ENCODE measurements at regions of chr13 and their contacts with region 1.

Region 1: GRCh38 chr13:46553886-46554858 is 1.2 kb downstream of the LRCH1 start:
- DNase-seq: peak; percentile 51 to 78 (median 77)
- H3K4me3 ChIP-seq: peak overlapping the region; percentile 55 to 93 (median 83)
- H3K4me3 Mint-ChIP-seq: peak overlapping the region; percentile 93 to 95
- H3K27ac ChIP-seq: peak overlapping the region; percentile 55 to 80
- H3K27ac Mint-ChIP-seq: peak overlapping the region; percentile 65 to 90 (median 87)
- H3K4me1 ChIP-seq: peaks cover 18 to 30% of the 10 kb centered on the region in 2 donors
- H3K4me1 Mint-ChIP-seq: peaks cover 38% of the 10 kb centered on the region
- H3K27me3 ChIP-seq: no peaks in the 10 kb centered on the region
- H3K27me3 Mint-ChIP-seq: peaks cover 6 to 14% (median 10%) of the 10 kb centered on the region in 3 donors
- CTCF ChIP-seq: peak; percentile 44

Region 2: GRCh38 chr13:45615501-45616101 is 938.6 kb before region 1 on chr13 and contains the start of gene ERICH6B:
- intact Hi-C with region 1: no loop called
- DNase-seq: no peak
- H3K4me3 ChIP-seq: peak within 1 kb of the TSS in 1 of 3 experiments; percentile 53
- H3K4me3 Mint-ChIP-seq: peak within 1 kb of the TSS; percentile 8 to 81
- H3K27ac ChIP-seq: no peak within 1 kb of the TSS
- H3K27ac Mint-ChIP-seq: no peak within 1 kb of the TSS
- H3K4me1 ChIP-seq: peaks cover 8 to 9% of the 10 kb centered on the region in 2 donors
- H3K4me1 Mint-ChIP-seq: peaks cover 10% of the 10 kb centered on the region
- H3K27me3 ChIP-seq: peaks cover 2 to 20% of the 10 kb centered on the region in 2 donors
- H3K27me3 Mint-ChIP-seq: peaks cover 22 to 44% (median 26%) of the 10 kb centered on the region in 3 donors
- CTCF ChIP-seq: no peak
- polyA plus RNA-seq, gene ERICH6B: not detected

Region 3: DNA sequence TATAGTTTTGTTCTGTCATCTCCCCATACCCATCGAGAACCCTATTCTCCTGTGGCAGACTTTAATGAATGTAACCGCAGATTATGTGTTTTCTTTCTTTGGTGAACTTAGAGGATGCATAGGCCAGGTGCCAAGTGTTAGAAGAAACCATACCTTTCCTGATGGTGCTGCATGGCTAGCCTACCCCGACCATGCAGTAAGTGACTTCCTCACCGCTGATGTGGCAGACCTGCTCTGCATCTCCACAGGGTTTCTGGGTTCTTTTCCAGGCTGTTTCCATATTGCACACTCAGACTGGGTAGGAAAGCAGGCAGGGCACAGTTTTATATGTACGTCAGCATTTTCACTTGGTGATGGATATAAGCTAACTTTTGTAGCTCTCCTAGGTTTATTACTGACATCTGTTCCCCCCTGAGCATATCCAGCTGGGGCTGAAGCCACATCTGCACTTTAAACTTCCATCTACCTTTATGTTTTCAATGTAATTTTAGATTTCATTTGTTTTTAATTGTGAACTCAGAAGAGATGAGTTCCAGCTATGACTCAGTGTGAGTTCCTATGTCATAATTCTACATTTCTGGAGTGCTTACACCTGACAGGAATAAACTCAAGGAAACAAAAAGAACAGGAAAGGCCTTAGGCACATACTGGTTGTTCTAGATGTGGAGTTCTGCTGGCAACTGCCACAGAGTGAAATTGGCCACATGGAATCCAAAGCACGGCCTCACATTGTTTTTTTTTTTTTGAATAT is 41.1 kb after region 1 on chr13:
- intact Hi-C with region 1: loop called in 1 of 2 experiments (anchors 5 kb)
- DNase-seq: peak in 2 of 3 donors; percentile 21 to 39
- H3K4me3 ChIP-seq: peak overlapping the region in 2 of 3 experiments; percentile 32 to 63
- H3K4me3 Mint-ChIP-seq: peak overlapping the region; percentile 39 to 77
- H3K27ac ChIP-seq: peak overlapping the region in 1 of 2 donors; percentile 77
- H3K27ac Mint-ChIP-seq: peak overlapping the region; percentile 82 to 91 (median 89)
- H3K4me1 ChIP-seq: peaks cover 53 to 57% of the 10 kb centered on the region in 2 donors
- H3K4me1 Mint-ChIP-seq: peaks cover 62% of the 10 kb centered on the region
- H3K27me3 ChIP-seq: no peaks in the 10 kb centered on the region
- H3K27me3 Mint-ChIP-seq: no peaks in the 10 kb centered on the region
- CTCF ChIP-seq: no peak

Region 4: DNA sequence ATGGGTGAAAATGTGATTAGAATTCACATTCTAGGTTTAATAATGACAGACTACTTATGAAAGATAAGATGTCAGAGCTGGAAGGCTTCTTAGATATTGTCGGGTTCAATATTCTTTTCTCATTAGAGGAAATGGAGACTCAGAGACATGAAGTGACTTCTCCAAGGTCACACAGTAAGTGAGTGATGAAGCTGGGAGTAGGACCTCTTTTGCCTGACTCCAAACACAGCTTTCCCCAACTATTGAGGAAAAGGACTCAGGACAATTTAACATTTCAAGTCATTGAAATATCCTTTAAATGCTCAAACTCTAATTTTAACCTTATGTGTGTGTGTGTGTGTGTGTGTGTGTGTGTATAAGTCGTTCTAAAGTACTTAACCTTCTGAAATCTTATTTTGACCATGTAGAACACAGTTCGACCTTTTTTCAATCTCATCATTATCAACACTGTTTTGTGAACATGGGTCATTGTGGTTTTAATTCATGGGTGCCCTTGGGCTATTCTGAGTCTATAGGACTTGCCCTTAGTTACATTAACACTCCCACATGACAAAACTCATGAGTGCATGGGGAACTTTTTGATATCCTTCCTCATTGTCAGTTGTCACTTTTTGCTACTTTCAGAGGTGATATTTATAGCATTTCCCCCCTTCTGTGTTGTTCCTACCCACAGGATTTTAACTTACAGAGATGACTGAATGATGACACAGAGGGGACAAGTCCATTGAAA is 51.8 kb after region 1 on chr13:
- intact Hi-C with region 1: loop called in 1 of 2 experiments (anchors 5 kb)
- DNase-seq: peak; percentile 49 to 78 (median 64)
- H3K4me3 ChIP-seq: peak overlapping the region in 1 of 3 experiments; percentile 37
- H3K4me3 Mint-ChIP-seq: peak overlapping the region; percentile 39 to 57
- H3K27ac ChIP-seq: peak overlapping the region; percentile 54 to 71
- H3K27ac Mint-ChIP-seq: peak overlapping the region; percentile 81 to 94 (median 88)
- H3K4me1 ChIP-seq: peaks cover 26 to 34% of the 10 kb centered on the region in 2 donors
- H3K4me1 Mint-ChIP-seq: peaks cover 50% of the 10 kb centered on the region
- H3K27me3 ChIP-seq: no peaks in the 10 kb centered on the region
- H3K27me3 Mint-ChIP-seq: peaks cover 0 to 3% (median 0%) of the 10 kb centered on the region in 3 donors
- CTCF ChIP-seq: no peak

Region 5: GRCh38 chr13:46648166-46648635 is 94.0 kb after region 1 on chr13:
- intact Hi-C with region 1: loop called in 1 of 2 experiments (anchors 10 kb)
- DNase-seq: no peak
- H3K4me3 ChIP-seq: no peak overlapping the region
- H3K4me3 Mint-ChIP-seq: peak overlapping the region in 1 of 2 donors; percentile 7
- H3K27ac ChIP-seq: no peak overlapping the region
- H3K27ac Mint-ChIP-seq: peak overlapping the region in 3 of 7 donors; percentile 3 to 64 (median 45)
- H3K4me1 ChIP-seq: no peaks in the 10 kb centered on the region
- H3K4me1 Mint-ChIP-seq: peaks cover 23% of the 10 kb centered on the region
- H3K27me3 ChIP-seq: no peaks in the 10 kb centered on the region
- H3K27me3 Mint-ChIP-seq: no peaks in the 10 kb centered on the region
- CTCF ChIP-seq: no peak

Region 6: DNA sequence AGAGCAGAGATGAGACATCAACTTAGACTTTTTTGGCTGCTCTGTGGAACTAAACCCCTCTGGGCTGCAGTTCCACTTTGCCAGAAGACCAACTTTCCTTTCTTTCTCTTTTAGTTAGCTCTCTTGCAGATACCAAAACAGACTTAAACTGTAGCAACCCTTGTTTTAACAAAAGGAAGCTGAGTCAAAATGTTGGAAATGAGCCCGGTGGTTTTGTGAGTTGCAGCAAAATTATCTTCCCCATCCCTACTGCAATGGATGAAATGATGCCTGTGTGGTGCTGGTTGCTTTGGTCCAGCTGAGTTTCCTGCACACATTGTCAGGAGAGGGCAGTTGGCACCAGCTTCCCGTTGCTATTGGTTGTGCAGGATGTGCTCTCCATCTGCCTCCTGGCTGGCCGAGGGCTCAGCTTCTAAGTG is 114.1 kb after region 1 on chr13:
- intact Hi-C with region 1: loop called in 1 of 2 experiments (anchors 5 kb)
- DNase-seq: peak; percentile 39 to 61 (median 44)
- H3K4me3 ChIP-seq: peak overlapping the region in 2 of 3 experiments; percentile 32 to 68
- H3K4me3 Mint-ChIP-seq: peak overlapping the region; percentile 67 to 68
- H3K27ac ChIP-seq: peak overlapping the region; percentile 7 to 83
- H3K27ac Mint-ChIP-seq: peak overlapping the region; percentile 72 to 92 (median 87)
- H3K4me1 ChIP-seq: peaks cover 13 to 22% of the 10 kb centered on the region in 2 donors
- H3K4me1 Mint-ChIP-seq: peaks cover 34% of the 10 kb centered on the region
- H3K27me3 ChIP-seq: no peaks in the 10 kb centered on the region
- H3K27me3 Mint-ChIP-seq: no peaks in the 10 kb centered on the region
- CTCF ChIP-seq: no peak

Region 7: GRCh38 chr13:46721054-46721453 is 166.9 kb after region 1 on chr13:
- intact Hi-C with region 1: loop called (anchors 5 kb)
- DNase-seq: peak in 2 of 3 donors; percentile 26 to 28
- H3K4me3 ChIP-seq: no peak overlapping the region
- H3K4me3 Mint-ChIP-seq: no peak overlapping the region
- H3K27ac ChIP-seq: no peak overlapping the region
- H3K27ac Mint-ChIP-seq: no peak overlapping the region
- H3K4me1 ChIP-seq: peaks cover 0 to 4% of the 10 kb centered on the region in 2 donors
- H3K4me1 Mint-ChIP-seq: peaks cover 14% of the 10 kb centered on the region
- H3K27me3 ChIP-seq: no peaks in the 10 kb centered on the region
- H3K27me3 Mint-ChIP-seq: peaks cover 0 to 2% (median 0%) of the 10 kb centered on the region in 3 donors
- CTCF ChIP-seq: peak; percentile 76

Region 8: GRCh38 chr13:46855166-46855565 is 301.0 kb after region 1 on chr13:
- intact Hi-C with region 1: no loop called
- DNase-seq: peak; percentile 6 to 43 (median 16)
- H3K4me3 ChIP-seq: no peak overlapping the region
- H3K4me3 Mint-ChIP-seq: peak overlapping the region in 1 of 2 donors; percentile 14
- H3K27ac ChIP-seq: no peak overlapping the region
- H3K27ac Mint-ChIP-seq: peak overlapping the region in 6 of 7 donors; percentile 23 to 62 (median 52)
- H3K4me1 ChIP-seq: peaks cover 16 to 17% of the 10 kb centered on the region in 2 donors
- H3K4me1 Mint-ChIP-seq: peaks cover 29% of the 10 kb centered on the region
- H3K27me3 ChIP-seq: no peaks in the 10 kb centered on the region
- H3K27me3 Mint-ChIP-seq: peaks cover 0 to 4% (median 0%) of the 10 kb centered on the region in 3 donors
- CTCF ChIP-seq: no peak